Dendritic cell treated with granulocyte-macrophage colony-stimulating factor and Interleukin-4, amounts not matched to agents 40 ng/mL and 50 ng/mL, for 4 days (primary cell): ENCODE measurements at regions of chr12 and their contacts with region 1.

Region 1: DNA sequence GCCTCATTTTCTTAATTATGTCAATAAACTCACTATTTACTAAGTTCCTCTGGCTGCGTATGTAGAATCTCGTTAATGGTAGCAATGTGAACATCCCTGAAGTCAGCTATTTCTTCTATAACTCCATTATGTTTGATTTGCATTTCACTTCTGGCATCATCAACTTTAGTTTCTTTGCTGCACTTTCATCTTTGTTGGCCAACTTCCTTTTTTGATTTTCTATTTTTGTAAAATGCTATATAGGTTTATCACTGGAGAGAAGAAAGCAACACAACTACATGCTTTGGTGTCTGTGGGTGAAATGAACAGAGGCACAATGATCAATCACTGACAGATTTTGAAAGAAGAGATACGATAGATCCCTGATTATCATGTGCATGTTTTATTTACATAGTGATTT is 58.5 kb upstream of the ATF7IP start:
- H3K4me3 Mint-ChIP-seq: no peak overlapping the region
- H3K27ac Mint-ChIP-seq: no peak overlapping the region
- H3K4me1 Mint-ChIP-seq: peaks cover 17% of the 10 kb centered on the region
- H3K27me3 Mint-ChIP-seq: no peaks in the 10 kb centered on the region

Region 2: DNA sequence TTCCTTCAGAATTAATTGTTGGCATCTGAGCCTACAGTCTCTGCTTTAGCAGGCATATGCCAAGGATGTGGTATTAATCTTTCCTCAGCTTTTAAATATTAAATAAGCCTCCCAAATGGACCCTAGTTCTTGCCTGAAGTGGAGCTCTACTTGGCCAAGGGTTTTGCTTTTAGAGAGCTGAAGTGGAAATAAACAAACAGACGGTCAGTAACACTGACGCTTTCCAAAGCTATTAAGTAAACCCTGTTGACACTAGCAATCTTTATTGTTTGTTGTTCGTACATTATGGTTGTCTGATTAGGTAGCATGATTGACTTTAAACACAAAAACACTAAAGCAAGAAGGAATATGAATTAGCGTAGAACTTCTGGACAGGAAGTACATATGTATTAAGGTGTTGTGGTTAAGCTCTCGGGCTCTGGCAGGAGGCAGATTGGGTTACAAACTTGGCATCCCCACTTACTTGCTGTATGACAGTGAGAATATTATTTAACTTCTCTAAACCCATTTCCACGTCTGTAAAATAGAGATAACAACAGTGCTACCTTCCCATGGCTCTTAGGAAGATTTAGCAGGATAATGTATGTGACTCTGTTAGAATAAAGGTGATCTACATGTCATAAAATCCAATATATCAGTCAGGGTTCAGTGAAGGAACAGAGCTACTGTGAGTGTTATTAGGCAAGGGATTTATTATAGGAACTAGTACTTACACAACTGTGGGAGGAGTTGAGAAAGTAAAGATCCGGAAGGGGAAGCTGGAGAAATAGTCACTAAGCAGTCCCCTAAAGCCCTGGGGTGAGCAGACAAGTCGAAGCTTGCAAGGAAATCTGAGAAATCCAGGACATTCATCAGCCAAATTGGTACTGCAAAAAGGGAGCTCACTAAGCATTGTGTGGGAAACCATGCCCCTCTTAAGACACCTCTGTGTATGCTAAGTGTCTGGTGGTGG is 33.8 kb before region 1 on chr12:
- intact Hi-C with region 1: loop called (anchors 5 kb)
- H3K4me3 Mint-ChIP-seq: no peak overlapping the region
- H3K27ac Mint-ChIP-seq: peak overlapping the region; percentile 94
- H3K4me1 Mint-ChIP-seq: peaks cover 40% of the 10 kb centered on the region
- H3K27me3 Mint-ChIP-seq: no peaks in the 10 kb centered on the region

Region 3: GRCh38 chr12:14460212-14460841 is 153.3 kb after region 1 on chr12:
- intact Hi-C with region 1: no loop called
- H3K4me3 Mint-ChIP-seq: no peak overlapping the region
- H3K27ac Mint-ChIP-seq: no peak overlapping the region
- H3K4me1 Mint-ChIP-seq: no peaks in the 10 kb centered on the region
- H3K27me3 Mint-ChIP-seq: no peaks in the 10 kb centered on the region

Region 4: DNA sequence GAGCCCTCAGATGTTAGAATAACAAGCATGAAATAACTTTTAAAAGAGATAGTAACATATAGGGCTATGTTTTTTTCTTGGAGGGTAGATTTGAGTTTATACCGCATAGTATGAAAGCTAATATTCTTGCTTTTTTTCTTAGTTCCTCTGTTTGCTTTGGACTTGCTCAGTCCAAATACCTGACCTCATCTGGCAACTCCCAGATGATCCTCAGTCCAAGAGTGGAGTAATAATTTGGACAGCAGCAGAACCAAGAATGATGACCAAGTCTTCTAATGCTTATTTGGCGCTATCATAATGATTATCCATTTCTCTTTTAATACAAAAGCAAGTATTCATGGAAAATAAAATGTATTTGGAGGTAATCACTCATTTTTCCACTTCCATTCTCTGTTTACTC is 343.8 kb after region 1 on chr12:
- intact Hi-C with region 1: no loop called
- H3K4me3 Mint-ChIP-seq: no peak overlapping the region
- H3K27ac Mint-ChIP-seq: no peak overlapping the region
- H3K4me1 Mint-ChIP-seq: peaks cover 5% of the 10 kb centered on the region
- H3K27me3 Mint-ChIP-seq: peaks cover 11% of the 10 kb centered on the region